Aorta (tissue), 5 donors: ENCODE measurements at regions of chr12 and their contacts with region 1.

Region 1: GRCh38 chr12:57124259-57124877 is 3.9 kb upstream of the LRP1 start:
- DNase-seq: peak in 1 of 2 donors; percentile 73
- ATAC-seq: peak; percentile 76
- H3K4me3 ChIP-seq: no peak overlapping the region
- H3K27ac ChIP-seq: no peak overlapping the region
- H3K4me1 ChIP-seq: no peaks in the 10 kb centered on the region
- H3K27me3 ChIP-seq: no peaks in the 10 kb centered on the region

Region 2: DNA sequence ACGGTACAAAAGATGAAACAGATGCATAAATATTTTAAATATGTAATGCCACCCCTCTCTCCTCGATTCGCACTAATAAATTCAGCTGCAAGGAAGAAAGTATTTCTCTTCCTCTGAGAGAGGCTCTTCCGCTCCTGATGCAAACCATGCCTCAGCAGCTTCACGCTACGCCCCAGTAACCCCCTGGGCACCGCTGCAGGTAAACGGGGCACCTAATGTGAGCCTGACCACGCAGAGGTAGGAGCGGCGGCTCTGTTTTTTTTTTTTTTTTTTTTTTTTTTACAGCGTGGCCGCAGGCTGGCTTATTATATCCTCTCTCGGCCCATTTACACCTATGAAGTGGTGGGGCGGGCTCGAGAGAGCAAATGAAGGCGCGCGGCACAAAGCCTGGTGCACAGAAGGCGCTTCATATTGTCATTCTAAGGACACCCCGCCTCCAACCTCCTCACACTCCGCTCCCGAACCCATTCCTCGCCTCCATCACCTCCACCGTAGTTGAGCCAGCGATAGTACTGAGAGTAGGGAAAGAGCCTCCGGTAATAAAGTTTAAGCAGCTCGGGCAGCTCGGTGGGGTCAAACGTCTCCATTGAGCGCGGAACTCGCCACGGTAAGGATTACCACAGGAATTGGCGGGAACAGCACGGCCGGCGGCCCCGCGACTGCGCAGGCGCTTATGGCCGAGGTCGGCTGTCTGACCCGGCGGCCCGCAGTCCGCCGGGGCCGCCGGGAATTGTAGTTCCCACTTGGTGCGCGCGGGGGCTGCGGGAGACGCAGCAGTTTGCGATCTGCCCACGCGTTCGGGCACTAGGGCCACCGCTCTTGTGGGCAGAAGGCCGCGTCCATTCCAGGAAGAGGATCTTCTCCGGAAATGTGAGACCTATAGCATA is 372.4 kb before region 1 on chr12 and contains the start of gene PRIM1:
- intact Hi-C with region 1: no loop called
- DNase-seq: peak; percentile 90 to 94
- ATAC-seq: peak; percentile 96
- H3K4me3 ChIP-seq: peak within 1 kb of the TSS; percentile 2 to 76
- H3K27ac ChIP-seq: no peak within 1 kb of the TSS
- H3K4me1 ChIP-seq: no peaks in the 10 kb centered on the region
- H3K27me3 ChIP-seq: no peaks in the 10 kb centered on the region
- total RNA-seq, gene PRIM1: 3.2 to 4.6 TPM

Region 3: DNA sequence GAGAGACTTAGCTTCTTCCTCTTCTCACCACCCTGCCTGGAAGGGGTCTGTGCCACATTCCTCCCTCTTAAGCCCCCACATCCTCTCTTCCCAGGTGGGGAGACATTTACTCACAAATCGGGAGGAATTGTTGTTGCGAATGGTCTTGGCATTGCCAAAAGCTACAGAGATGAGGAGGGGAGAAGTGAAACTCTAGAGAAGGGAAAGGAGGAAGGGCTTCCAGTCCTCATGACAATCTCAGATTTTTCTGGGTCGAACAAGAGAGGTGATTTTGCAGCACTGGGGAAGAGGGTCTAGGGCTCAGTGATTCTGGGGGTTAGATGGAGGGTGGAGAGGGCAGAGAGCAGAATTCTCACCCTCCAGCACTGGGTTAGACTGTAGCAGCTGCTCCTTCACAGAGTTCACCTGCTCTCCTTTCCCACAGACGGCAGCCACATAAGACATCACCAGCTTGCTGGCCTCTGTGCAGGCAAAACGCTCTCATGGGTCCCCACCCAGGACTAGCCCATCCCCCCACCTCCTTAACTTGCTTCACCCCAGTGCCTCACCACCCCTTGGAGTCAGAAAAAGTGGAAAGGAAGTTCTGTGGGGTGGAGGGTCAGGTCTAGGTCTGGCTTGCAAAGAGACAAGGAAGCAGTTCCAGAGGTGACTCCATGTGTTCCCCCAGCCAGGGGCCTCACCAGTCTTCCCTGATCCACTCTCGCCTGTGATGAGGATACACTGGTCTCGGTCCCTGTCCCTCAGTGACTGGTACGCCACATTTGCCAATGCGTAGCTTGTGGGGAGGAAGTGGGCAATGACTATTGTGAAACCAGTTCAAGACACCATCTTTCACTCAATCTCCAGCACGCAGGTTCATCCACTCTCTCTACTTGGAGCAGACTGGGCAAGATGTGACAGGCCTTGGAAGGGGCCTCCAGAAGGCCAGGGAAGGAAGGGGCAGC is 77.1 kb before region 1 on chr12:
- intact Hi-C with region 1: no loop called
- DNase-seq: no peak
- ATAC-seq: no peak
- H3K4me3 ChIP-seq: no peak overlapping the region
- H3K27ac ChIP-seq: no peak overlapping the region
- H3K4me1 ChIP-seq: no peaks in the 10 kb centered on the region
- H3K27me3 ChIP-seq: no peaks in the 10 kb centered on the region

Region 4: GRCh38 chr12:57175428-57176138 is 51.2 kb after region 1 on chr12:
- intact Hi-C with region 1: loop called (anchors 2 kb)
- DNase-seq: peak; percentile 89 to 96
- ATAC-seq: peak; percentile 75
- H3K4me3 ChIP-seq: no peak overlapping the region
- H3K27ac ChIP-seq: peak overlapping the region in 1 of 2 donors; percentile 9
- H3K4me1 ChIP-seq: no peaks in the 10 kb centered on the region
- H3K27me3 ChIP-seq: no peaks in the 10 kb centered on the region

Region 5: DNA sequence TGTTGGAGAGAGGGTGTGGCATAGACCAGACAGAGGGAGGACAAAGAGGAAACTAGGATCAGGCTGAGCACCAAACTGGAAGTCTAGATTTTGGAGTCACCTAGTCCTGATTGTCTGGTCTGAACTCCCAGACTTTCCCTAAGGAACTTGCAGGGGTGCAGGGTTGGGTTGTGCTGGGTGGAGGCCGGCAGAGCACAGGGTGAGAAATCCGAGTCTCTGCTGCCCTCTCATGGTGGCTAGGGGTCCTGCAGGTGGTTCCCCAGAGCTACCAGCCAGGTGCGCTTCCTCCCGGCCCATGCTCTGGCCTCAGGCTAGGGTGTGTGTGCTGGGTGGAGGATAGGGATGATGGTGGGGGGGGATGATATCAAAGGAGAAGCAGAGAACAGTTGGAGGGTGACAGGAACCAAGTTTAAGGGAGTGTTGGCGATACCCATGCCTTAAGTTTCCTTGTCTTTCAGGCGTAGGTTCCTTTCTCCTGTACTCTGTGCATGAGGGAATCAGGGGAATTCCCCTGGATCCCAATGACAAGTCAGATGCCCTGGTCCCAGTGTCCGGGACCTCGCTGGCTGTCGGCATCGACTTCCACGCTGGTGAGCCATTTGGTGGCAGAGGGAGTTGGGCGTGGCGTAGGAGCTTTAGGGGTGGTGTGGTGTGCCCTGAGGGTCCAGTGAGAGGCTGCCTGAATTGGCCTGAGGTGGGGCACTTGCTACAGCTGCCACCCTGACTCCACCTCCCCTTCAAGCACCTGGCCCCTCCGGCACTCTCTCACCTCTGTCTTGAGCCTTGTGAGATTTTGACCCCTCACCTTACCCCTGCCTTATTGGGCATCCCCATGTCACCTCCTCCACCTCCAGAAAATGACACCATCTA is 58.8 kb after region 1 on chr12:
- intact Hi-C with region 1: loop called in 1 of 2 experiments (anchors 2 kb)
- DNase-seq: peak; percentile 77 to 90
- ATAC-seq: peak; percentile 83
- H3K4me3 ChIP-seq: no peak overlapping the region
- H3K27ac ChIP-seq: no peak overlapping the region
- H3K4me1 ChIP-seq: no peaks in the 10 kb centered on the region
- H3K27me3 ChIP-seq: no peaks in the 10 kb centered on the region